ENCODE measurements at regions of chr9 and their contacts with region 1.

Region 1: DNA sequence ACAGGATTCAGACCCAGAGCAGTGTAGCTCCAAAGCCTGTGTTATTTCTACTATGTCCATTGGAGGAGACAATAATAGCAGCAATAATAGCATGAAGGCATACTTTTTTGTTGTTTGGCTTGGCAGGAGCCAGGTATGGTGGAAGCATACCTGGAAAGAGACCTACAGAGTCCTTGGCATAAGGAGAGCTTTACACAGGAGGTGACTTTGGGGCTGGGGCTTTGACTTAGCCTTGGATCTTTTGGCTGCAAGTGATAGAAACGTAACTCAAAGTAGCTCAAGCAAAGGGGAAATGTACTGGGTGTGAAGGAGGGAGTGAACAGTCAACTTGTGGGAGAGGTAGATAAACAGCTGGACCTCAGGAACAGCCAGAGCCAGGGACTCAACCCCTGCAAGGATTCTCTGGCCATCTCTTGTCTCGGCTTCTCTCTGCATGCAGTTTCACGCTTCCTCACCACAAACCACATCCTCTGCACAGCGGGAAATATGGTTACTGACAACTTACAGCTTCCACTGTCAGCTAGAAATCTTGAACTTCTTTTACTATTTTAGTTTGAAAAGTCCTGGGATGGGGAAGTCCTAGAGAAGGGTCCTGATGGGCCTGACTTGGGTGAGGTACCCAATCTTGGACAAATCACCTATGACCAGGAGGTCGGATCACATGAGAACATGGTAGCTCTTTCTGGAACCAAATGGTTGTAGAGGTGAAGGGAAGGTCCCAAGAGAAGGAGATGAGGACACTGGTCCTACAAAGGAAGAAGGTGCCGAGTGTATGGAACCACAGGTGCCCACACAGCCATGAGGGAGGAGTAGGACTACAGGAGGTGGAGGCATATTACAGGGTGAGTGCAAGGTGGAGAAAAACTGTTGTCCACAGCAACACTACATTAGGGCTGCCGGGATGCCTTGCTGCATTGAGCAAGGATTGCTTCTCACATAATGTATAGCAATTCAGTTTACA is 47.0 kb upstream of the TGFBR1 start:
- DNase-seq: peak; percentile 79
- H3K4me3 Mint-ChIP-seq: peak overlapping the region; percentile 83
- H3K27ac Mint-ChIP-seq: peak overlapping the region; percentile 92
- H3K4me1 Mint-ChIP-seq: peaks cover 72% of the 10 kb centered on the region
- H3K27me3 Mint-ChIP-seq: no peaks in the 10 kb centered on the region

Region 2: GRCh38 chr9:99012942-99013512 is 44.9 kb before region 1 on chr9:
- intact Hi-C with region 1: loop called (anchors 5 kb)
- DNase-seq: no peak
- H3K4me3 Mint-ChIP-seq: no peak overlapping the region
- H3K27ac Mint-ChIP-seq: peak overlapping the region; percentile 88
- H3K4me1 Mint-ChIP-seq: peaks cover 18% of the 10 kb centered on the region
- H3K27me3 Mint-ChIP-seq: peaks cover 3% of the 10 kb centered on the region

Region 3: GRCh38 chr9:99037769-99038483 is 20.0 kb before region 1 on chr9:
- intact Hi-C with region 1: no loop called
- DNase-seq: no peak
- H3K4me3 Mint-ChIP-seq: no peak overlapping the region
- H3K27ac Mint-ChIP-seq: no peak overlapping the region
- H3K4me1 Mint-ChIP-seq: peaks cover 56% of the 10 kb centered on the region
- H3K27me3 Mint-ChIP-seq: peaks cover under 1% of the 10 kb centered on the region

Region 4: DNA sequence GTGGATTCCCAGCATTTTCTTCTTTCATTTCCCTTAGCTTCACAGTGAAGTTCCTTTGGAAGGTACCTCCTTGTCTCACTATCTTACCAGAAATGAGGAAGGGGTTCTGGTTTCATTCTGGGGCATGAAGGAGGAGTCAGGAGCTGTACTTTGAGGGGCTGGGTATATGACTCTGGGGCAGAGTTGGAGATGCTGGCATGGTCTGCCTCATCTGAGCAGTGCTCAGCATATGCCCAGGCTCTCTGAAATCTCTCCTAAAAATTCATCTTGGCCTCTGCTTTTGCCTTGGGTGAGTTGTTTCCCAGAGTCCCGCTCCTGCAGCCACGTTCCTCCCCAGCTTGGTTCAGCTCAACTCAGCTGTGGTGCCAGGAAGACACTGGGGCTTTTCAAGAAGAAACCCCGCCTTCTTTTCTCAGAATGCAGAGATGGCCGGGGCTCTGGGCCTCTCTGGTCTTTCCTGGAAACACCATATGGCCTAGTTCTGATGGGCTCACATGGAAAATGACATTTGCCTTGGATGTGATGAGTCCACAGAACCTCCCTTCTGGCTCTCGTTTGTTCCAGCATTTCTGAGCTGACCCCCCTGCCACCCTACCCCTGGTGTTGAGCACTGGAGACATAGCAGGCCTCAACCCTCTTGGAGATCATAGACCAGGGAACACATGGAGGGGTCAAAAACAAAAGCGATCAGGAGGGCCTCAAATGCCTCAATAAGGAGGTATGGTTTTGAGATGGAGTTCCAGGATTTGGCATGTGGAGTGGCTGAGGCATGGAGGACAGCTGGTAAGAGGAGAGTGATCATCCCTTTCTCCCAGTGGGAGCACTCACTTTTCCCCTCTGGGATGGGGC is 34.9 kb after region 1 on chr9:
- intact Hi-C with region 1: loop called (anchors 1 kb)
- DNase-seq: peak; percentile 57
- H3K4me3 Mint-ChIP-seq: peak overlapping the region; percentile 60
- H3K27ac Mint-ChIP-seq: peak overlapping the region; percentile 98
- H3K4me1 Mint-ChIP-seq: peaks cover 65% of the 10 kb centered on the region
- H3K27me3 Mint-ChIP-seq: no peaks in the 10 kb centered on the region

Region 5: DNA sequence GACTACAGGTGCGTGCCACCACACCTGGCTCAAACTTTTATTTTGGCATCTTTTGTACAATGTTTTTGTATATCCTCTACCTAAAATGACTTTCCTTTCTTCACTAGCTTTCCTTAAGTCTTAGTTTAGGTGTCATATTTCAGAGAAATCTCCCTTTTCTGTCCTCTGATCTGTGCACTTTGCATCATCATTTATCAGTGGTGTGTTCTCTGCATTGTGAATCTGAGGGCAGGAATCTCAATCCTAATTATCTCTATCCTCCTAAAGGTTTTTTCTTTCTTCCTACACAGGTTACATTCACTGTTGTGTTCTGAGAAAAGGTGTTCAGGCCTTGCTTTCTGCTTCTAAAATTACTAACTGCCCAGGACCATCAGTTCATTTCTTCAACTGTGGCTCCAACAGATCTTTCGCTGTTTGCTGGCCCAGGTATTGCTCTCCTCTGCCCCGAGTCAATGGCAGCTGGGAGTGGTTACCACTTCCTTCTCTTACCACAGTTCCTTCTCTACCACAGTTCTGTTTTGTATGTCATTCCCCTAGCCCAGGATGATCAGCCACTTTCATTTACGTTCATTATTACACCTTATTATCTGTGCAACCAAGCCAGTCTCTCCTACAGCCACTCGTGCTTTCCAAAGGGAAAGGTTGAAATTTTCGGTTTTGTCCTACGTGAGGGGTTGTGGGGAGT is 61.0 kb after region 1 on chr9:
- intact Hi-C with region 1: loop called (anchors 1 kb)
- DNase-seq: peak; percentile 50
- H3K4me3 Mint-ChIP-seq: peak overlapping the region; percentile 77
- H3K27ac Mint-ChIP-seq: peak overlapping the region; percentile 83
- H3K4me1 Mint-ChIP-seq: peaks cover 78% of the 10 kb centered on the region
- H3K27me3 Mint-ChIP-seq: no peaks in the 10 kb centered on the region

Region 6: DNA sequence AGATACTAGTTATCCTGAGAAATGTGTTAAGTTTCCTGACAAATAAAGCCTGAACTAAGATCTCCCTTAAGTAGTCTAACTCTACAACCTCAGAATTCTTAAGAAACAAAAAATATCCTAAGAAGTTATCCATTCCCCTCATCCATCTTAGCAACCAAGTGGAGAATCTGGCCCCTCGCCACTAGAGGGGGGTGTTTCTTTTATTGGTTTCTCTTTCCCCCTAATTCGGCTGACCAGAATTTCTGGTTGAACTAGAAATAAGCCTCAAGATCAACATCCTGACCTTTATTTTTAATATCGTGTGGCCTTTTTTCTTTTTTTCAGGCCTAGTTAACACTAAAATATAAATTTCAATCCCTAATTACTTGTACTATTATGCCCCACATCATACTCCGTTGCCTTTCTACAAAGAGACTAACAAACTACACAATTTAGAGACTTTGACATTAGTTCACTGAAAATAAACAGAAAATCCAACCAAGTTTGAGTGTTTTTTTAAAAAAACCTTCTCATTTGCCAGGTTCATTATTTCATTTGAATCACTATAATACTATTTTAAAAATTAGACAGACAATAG is 749.4 kb after region 1 on chr9:
- intact Hi-C with region 1: loop called (anchors 5 kb)
- DNase-seq: peak; percentile 43
- H3K4me3 Mint-ChIP-seq: no peak overlapping the region
- H3K27ac Mint-ChIP-seq: no peak overlapping the region
- H3K4me1 Mint-ChIP-seq: peaks cover 37% of the 10 kb centered on the region
- H3K27me3 Mint-ChIP-seq: peaks cover 26% of the 10 kb centered on the region